ENCODE measurements at regions of chr7 and their contacts with region 1.

Region 1: DNA sequence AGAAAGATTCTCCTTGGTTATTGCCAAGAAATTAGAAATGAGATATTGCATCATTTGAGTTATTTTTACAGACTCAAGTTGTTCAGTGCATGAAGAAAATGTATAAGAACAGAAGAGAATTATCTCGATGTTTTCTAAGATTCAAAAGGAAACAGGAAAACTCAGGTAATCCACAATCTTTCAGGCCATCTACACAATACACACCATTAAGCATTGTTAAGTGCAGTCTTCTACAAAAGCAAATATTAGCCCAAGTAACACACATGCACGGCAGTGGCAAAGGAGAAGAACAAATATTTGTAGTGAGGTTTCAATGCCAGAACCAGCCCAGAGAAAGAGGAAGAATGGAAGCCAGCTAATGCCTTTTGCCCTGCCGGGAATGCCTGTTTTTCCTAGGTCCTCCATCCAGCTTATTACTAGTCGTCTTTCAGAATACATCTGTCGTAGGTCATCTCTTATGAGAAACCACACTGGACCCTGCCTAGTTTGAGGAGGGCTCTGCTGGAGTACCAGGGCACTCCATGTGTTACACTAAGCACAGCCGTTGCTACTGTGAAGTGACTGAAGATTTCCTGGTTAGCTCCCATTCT is 67.5 kb upstream of the C1GALT1 start:
- DNase-seq: no peak
- CTCF ChIP-seq: no peak

Region 2: DNA sequence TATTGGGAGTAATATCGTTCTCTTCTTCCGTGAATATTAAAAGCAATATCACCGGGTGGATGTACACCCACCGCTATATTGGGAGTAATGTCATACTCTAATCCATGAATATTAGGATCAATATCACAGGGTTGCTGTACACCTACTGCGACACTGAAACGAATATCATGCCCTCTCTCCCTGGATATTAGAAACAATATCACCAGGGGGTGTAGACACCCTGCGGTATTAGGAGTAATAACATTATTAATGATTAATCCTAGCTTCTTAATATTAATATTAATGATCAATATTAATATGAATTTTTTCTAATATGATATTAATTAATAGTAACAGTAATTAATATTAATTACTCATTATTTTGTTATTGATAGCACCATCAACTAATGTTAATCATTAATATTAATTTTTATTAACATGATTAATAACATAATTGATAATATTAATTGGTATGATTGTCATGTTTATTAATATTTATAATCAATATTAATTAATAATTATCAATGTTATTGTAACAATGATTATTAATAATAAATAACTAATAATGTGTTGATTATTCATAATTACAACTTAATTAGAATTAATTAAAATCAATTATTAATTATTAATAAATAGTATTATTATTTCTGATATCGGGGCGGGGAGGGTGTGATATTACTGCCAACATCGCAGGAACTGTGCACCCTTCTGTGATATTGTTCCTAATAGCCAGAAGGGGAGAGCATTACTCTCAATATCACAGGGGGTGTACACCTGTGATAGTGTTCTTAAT is 53.8 kb before region 1 on chr7:
- in situ Hi-C with region 1: no loop called
- DNase-seq: no peak
- CTCF ChIP-seq: no peak

Region 3: DNA sequence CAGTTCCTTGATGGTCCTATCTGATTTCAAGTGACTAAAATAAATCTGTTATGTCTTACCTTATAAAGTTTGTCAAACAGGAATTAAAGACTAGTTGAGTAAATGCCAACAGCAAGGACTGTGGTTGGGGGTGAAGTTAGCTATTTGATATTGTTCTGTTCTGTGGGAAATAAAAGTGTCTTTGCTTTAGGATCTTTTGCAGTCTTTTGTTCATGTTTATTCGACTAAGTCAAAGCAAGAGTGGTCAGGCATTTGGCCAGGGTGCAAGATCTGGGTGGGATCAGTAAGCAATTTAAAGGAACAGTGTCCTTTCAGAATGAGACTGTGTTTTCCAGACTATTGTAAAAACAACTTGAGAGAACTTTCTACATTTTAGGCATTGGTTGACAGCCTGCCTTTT is 420.9 kb after region 1 on chr7 and contains the start of gene COL28A1:
- in situ Hi-C with region 1: loop called (anchors 10 kb)
- DNase-seq: no peak
- CTCF ChIP-seq: no peak